Heart left ventricle (tissue), 16 donors: ENCODE measurements at regions of chrX and their contacts with region 1.

Region 1: GRCh38 chrX:31658360-31658759 is 586.5 kb upstream of the FTHL17 start:
- DNase-seq: no peak
- ATAC-seq: no peak
- H3K4me3 ChIP-seq: no peak overlapping the region
- H3K27ac ChIP-seq: no peak overlapping the region
- H3K4me1 ChIP-seq: no peaks in the 10 kb centered on the region
- H3K27me3 ChIP-seq: no peaks in the 10 kb centered on the region
- CTCF ChIP-seq: peak; percentile 25 to 62 (median 54)
- POLR2A ChIP-seq: no peak

Region 2: GRCh38 chrX:30504309-30504708 is 1154.1 kb before region 1 on chrX:
- intact Hi-C with region 1: no loop called
- DNase-seq: no peak
- ATAC-seq: no peak
- H3K4me3 ChIP-seq: no peak overlapping the region
- H3K27ac ChIP-seq: no peak overlapping the region
- H3K4me1 ChIP-seq: no peaks in the 10 kb centered on the region
- H3K27me3 ChIP-seq: peaks cover 0 to 21% (median 0%) of the 10 kb centered on the region in 9 donors
- CTCF ChIP-seq: peak in 11 of 12 donors; percentile 17 to 50 (median 42)
- POLR2A ChIP-seq: no peak

Region 3: DNA sequence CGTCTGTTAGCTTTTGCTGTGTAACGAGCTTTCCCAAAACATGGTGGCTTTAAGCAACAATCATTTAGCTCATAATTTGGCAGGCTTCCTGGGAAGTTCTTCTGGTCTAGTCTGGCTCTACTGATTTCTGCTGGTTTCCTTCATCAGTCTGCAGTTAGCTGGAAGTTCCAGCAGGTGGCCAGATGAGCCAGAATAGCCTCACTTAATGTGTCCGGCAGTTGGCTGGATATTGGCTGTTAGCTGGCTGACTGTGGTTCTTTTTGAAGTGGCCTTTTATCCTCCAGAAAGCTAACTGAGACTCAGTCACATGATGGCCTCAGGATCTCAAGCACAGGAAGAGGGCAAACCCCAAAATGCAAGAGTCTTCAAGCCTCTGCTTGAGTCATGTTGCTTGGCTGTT is 621.5 kb before region 1 on chrX:
- intact Hi-C with region 1: loop called (anchors 2 to 10 kb)
- DNase-seq: peak in 4 of 5 donors; percentile 19 to 50 (median 36)
- ATAC-seq: peak in 2 of 4 donors; percentile 69 to 85
- H3K4me3 ChIP-seq: no peak overlapping the region
- H3K27ac ChIP-seq: no peak overlapping the region
- H3K4me1 ChIP-seq: no peaks in the 10 kb centered on the region
- H3K27me3 ChIP-seq: peaks cover 0 to 3% (median 0%) of the 10 kb centered on the region in 9 donors
- CTCF ChIP-seq: peak; percentile 30 to 68 (median 51)
- POLR2A ChIP-seq: no peak

Region 4: DNA sequence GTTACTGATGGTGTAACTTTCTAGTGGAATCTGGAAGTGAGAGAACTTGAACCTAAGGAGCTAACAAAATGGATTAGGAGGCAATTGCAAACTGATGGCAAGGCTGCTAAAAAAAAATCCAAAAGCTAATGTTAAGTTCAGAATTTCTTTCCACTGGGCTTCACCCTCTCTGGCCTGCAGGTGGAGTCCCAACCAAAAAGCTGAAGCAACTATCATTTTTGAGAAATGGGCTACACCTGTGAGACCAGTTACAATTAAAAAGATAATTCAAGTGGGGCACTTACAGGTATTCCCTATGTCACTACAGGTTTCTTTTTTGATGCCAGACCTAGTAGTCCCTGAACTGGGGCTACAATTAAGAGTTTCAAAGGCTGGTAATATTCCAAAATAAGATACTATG is 444.4 kb before region 1 on chrX:
- intact Hi-C with region 1: loop called in 4 of 10 experiments (anchors 5 to 10 kb)
- DNase-seq: no peak
- ATAC-seq: no peak
- H3K4me3 ChIP-seq: no peak overlapping the region
- H3K27ac ChIP-seq: no peak overlapping the region
- H3K4me1 ChIP-seq: peaks cover 0 to 25% (median 10%) of the 10 kb centered on the region in 12 donors
- H3K27me3 ChIP-seq: no peaks in the 10 kb centered on the region
- CTCF ChIP-seq: peak in 11 of 12 donors; percentile 18 to 56 (median 43)
- POLR2A ChIP-seq: no peak

Region 5: GRCh38 chrX:31266172-31267076 is 391.9 kb before region 1 on chrX:
- intact Hi-C with region 1: loop called in 2 of 10 experiments (anchors 5 kb)
- DNase-seq: peak; percentile 50 to 78 (median 63)
- ATAC-seq: peak; percentile 79 to 93 (median 91)
- H3K4me3 ChIP-seq: peak overlapping the region; percentile 39 to 90 (median 69)
- H3K27ac ChIP-seq: peak overlapping the region in 11 of 12 donors; percentile 34 to 81 (median 70)
- H3K4me1 ChIP-seq: peaks cover 0 to 7% (median 0%) of the 10 kb centered on the region in 12 donors
- H3K27me3 ChIP-seq: peaks cover 0 to 9% (median 0%) of the 10 kb centered on the region in 9 donors
- CTCF ChIP-seq: no peak
- POLR2A ChIP-seq: peak in 1 of 2 donors; percentile 44

Region 6: DNA sequence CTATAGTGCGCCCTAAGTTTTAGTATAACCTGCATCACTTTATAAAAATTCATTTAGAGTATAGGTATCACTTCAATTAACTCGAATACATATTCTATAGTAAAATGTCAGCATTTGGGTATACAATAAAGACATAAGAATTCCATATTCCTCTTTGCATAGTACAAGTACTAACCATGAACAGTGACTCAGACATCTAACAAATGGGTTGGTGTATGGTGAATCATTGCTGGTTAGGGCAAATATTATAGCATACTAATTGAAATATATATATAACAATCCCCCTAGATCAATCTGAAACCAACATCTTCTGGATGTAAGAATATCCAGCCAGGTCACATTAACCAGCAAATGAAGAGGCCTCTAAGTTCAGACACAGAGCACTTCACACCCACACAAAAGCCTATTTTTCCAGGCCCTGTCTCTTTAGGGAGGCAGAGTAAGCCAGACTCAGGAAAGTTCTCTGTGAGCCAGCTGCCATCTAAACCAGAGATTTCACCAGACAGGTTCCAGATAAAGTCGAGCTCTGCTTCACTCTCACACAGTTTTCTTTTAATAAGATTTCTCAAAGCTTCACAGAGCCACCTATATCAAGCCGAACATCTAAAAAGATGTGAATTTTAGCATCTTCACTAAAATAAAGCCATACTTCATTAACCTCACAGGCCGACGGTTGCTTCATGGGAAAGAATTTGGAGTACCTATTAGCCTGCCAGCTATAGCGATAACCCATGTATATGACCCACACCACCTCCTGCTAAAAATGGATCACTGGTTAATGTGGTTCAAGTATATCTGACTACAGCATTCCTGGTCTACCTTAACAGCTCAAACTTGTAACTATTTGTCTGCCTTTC is 386.5 kb before region 1 on chrX:
- intact Hi-C with region 1: loop called in 2 of 10 experiments (anchors 5 kb)
- DNase-seq: no peak
- ATAC-seq: peak in 3 of 4 donors; percentile 63 to 76 (median 74)
- H3K4me3 ChIP-seq: no peak overlapping the region
- H3K27ac ChIP-seq: peak overlapping the region in 7 of 12 donors; percentile 24 to 66 (median 39)
- H3K4me1 ChIP-seq: peaks cover 0 to 18% (median 0%) of the 10 kb centered on the region in 12 donors
- H3K27me3 ChIP-seq: peaks cover 0 to 3% (median 0%) of the 10 kb centered on the region in 9 donors
- CTCF ChIP-seq: no peak
- POLR2A ChIP-seq: no peak

Region 7: GRCh38 chrX:31546130-31546529 is 112.2 kb before region 1 on chrX:
- intact Hi-C with region 1: no loop called
- DNase-seq: no peak
- ATAC-seq: peak in 2 of 4 donors; percentile 76 to 83
- H3K4me3 ChIP-seq: no peak overlapping the region
- H3K27ac ChIP-seq: no peak overlapping the region
- H3K4me1 ChIP-seq: no peaks in the 10 kb centered on the region
- H3K27me3 ChIP-seq: no peaks in the 10 kb centered on the region
- CTCF ChIP-seq: no peak
- POLR2A ChIP-seq: no peak

Region 8: GRCh38 chrX:31604629-31605221 is 53.6 kb before region 1 on chrX:
- intact Hi-C with region 1: no loop called
- DNase-seq: no peak
- ATAC-seq: no peak
- H3K4me3 ChIP-seq: no peak overlapping the region
- H3K27ac ChIP-seq: no peak overlapping the region
- H3K4me1 ChIP-seq: peaks cover 0 to 6% (median 0%) of the 10 kb centered on the region in 12 donors
- H3K27me3 ChIP-seq: peaks cover 0 to 5% (median 0%) of the 10 kb centered on the region in 9 donors
- CTCF ChIP-seq: no peak
- POLR2A ChIP-seq: no peak

Region 9: DNA sequence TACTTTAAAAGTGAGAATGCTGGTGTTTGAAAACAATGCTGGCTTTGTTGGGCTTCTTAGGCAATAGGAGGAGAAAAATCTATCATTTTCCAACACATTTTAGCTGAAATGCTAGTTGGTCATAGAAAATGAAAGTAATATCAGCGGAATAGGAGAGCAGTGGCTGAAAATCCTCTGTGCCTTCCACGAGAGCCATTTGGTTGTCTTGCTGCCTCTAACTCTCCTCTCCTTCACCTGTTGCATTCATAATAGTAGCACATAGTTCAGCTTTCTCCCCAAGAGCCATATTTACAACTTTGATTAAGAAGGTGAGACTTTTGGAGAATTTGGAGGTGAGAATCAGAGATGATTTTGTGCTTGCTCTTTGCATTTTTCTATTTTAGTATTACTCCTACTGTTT is 262.9 kb after region 1 on chrX:
- intact Hi-C with region 1: loop called in 1 of 10 experiments (anchors 5 kb)
- DNase-seq: no peak
- ATAC-seq: no peak
- H3K4me3 ChIP-seq: peak overlapping the region in 3 of 12 donors; percentile 7 to 28 (median 24)
- H3K27ac ChIP-seq: peak overlapping the region in 1 of 12 donors; percentile 5
- H3K4me1 ChIP-seq: no peaks in the 10 kb centered on the region
- H3K27me3 ChIP-seq: no peaks in the 10 kb centered on the region
- CTCF ChIP-seq: no peak
- POLR2A ChIP-seq: no peak